ENCODE measurements at regions of chr5 and their contacts with region 1.

Region 1: GRCh38 chr5:135565725-135566421 is 12.9 kb downstream of the CXCL14 start:
- DNase-seq: no peak
- H3K4me3 ChIP-seq: no peak overlapping the region
- H3K27ac ChIP-seq: no peak overlapping the region
- H3K27me3 ChIP-seq: peaks cover 12% of the 10 kb centered on the region
- CTCF ChIP-seq: peak; percentile 95

Region 2: DNA sequence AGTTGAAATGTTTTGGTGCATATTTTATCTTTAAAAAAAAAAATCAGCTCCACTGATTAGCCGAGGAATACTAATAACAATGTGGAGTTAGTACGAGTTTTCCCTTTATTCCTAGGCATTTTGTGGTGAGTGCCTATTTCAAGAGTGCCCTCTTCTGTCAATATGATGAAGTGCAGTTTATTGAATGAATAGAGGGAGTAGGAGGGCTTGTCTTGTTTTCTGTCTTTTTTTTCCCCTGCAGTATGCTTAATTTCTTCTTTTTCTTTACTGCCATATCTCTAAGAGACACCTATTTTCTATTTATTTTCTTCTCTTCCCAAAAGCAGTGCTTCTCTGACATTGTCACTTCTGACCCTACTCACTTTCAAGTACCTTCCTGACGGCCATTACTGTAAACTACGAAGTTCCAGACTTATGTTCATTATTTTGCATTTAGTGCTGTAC is 362.3 kb before region 1 on chr5:
- CTCF ChIA-PET with region 1: no interaction called
- POLR2A ChIA-PET with region 1: no interaction called
- DNase-seq: no peak
- H3K4me3 ChIP-seq: no peak overlapping the region
- H3K27ac ChIP-seq: no peak overlapping the region
- H3K27me3 ChIP-seq: no peaks in the 10 kb centered on the region
- CTCF ChIP-seq: peak; percentile 39

Region 3: DNA sequence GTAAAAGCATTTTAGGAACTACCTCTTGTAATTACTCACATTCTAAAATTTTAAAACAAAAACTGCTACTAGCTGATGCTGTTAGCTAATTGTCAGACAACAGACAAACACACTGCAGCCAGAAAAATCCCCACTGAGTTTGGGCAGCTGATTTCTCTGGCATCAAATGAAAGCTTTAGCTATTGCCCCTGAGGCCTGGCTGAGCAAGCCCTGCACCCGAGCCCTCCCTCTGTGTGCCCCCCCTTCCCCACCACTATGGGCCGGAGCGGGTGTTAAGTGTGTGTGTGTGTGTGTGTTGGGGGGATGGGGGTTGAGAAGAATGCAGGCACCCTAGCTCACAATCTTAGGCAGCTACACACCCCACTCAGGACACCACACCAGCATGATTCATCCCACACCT is 32.5 kb before region 1 on chr5:
- CTCF ChIA-PET with region 1: interaction called, 12 read pairs
- POLR2A ChIA-PET with region 1: no interaction called
- DNase-seq: no peak
- H3K4me3 ChIP-seq: no peak overlapping the region
- H3K27ac ChIP-seq: no peak overlapping the region
- H3K27me3 ChIP-seq: peaks cover 72% of the 10 kb centered on the region
- CTCF ChIP-seq: no peak

Region 4: DNA sequence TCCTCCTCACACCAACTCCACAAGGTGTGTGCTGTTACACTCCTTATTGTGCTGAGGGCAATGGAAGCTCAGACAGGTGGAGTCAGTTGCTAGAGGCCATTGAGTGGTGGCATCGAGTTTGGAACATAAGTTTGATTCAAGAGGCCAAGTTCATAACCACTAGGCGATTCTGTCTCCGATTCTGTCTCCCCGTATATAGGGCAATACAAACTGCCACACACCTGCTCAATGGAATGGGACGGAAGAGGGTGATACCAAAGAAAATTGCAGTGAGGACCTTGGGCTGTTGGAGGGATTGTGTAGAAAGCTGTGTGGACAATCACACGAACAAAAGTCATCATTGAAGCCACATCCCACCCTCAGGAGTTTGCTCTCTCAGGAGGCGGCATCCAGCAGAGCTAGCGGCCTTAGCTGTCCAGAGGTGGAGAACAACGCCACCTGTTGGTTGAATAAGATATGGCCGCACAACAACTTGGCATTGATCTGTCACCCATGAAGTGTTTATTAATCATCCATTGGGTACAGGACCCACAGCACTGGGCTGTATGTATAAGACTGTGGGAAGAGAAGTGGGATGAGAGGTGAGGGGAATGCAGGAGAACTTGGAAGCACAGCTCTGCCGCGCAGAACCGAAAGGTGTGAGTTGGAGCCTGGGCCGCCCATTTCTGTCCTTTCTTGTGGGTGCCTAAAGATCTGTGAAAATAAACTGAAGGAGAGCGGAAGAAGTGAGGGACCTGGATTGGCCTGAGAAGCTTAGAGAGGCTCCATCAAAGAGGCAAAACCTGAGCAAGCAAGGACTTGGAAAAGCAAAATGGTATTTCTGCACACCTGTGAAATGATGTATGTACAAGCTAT is 14.1 kb before region 1 on chr5:
- CTCF ChIA-PET with region 1: interaction called, 182 read pairs
- POLR2A ChIA-PET with region 1: no interaction called
- DNase-seq: peak; percentile 38
- H3K4me3 ChIP-seq: no peak overlapping the region
- H3K27ac ChIP-seq: no peak overlapping the region
- H3K27me3 ChIP-seq: peaks cover 56% of the 10 kb centered on the region
- CTCF ChIP-seq: peak; percentile 88

Region 5: DNA sequence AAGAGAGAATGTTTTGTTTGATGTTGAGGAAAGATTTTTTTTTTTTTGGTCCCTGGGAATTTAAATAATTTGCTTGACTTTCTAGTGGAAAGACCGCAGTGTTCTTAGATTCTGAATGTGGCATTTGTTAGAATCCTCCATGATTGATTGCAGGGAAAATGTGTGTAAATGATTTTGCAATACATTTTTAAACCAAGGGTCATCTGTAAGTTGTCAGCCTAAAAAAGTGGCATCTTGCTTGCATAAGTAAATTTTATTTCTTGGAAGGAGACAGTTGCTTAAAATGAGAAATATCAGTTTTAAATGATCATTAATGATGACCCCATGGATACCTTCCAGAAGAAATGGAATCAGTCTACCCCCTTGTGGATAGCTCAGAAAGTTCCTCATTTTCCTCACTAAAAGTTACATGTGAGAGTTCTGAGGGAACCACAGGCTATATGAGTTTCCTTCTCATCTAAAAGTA is 163.5 kb after region 1 on chr5:
- CTCF ChIA-PET with region 1: interaction called, 14 read pairs
- POLR2A ChIA-PET with region 1: no interaction called
- DNase-seq: no peak
- H3K4me3 ChIP-seq: no peak overlapping the region
- H3K27ac ChIP-seq: no peak overlapping the region
- H3K27me3 ChIP-seq: peaks cover 3% of the 10 kb centered on the region
- CTCF ChIP-seq: peak; percentile 15; the same call in 1 of the 2 replicates